HEK293 (cell line): ENCODE measurements at regions of chr22 and their contacts with region 1.

Region 1: DNA sequence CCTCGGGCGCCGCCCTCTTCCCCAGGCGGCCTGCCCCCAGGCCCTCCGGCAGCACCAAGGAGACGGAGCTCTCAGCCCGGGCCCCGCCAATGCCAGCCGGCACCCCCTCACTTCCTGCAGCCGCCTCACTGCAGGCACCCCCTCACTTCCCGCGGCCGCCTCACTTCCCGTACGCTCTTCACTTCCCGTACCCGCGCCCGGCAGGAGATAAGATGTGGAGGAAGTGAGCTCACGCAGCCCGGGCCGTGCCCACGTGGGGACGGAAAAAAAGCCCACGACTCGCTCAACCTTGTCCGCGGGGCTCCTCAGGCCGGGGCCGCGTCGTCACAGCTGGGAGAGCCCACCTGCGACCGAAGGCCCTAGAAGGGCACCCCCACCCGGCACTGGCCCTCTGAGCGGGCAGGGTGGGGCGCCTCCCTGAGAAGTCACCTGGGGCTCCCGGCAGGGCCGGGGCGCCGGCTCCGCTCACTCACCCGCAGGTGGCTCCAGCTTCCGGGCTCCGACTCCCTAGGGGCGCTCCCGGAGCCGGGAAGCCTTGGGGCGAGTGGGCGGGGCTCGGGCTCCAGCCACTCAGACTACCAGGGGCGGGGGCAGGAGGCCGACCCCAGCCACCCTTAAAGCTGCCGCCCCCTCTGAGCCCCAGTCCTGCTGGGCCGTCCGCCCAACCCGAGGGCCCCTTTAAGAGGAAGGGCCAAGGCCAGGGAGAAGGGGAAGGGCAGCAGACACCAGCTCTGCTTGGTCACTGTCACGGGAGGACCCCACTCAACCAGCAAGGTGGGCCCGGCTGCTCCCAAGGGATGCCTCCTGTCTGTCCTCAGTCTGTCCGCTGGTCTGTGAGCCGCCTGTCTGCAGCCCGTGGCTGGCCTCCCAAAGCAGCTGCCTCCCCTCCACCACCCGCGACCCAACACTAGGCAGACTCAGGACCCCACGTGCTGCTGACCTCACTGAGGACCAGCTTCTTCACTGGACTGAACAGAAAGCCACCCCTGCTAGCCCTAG is 31.4 kb downstream of the PISD start:
- H3K4me3 ChIP-seq: peak overlapping the region; percentile 73
- H3K27ac ChIP-seq: peak overlapping the region; percentile 80
- H3K4me1 ChIP-seq: peaks cover 2% of the 10 kb centered on the region; the same call in 1 of the 2 replicates
- CTCF ChIP-seq: no peak; the same call in 1 of the 2 replicates

Region 2: GRCh38 chr22:31345331-31346254 is 285.0 kb before region 1 on chr22:
- CTCF ChIA-PET with region 1: interaction called, 4 read pairs
- POLR2A ChIA-PET with region 1: interaction called, 10 read pairs
- H3K4me3 ChIP-seq: peak overlapping the region; percentile 70
- H3K27ac ChIP-seq: peak overlapping the region; percentile 92
- H3K4me1 ChIP-seq: peaks cover 23% of the 10 kb centered on the region
- CTCF ChIP-seq: peak; percentile 95

Region 3: DNA sequence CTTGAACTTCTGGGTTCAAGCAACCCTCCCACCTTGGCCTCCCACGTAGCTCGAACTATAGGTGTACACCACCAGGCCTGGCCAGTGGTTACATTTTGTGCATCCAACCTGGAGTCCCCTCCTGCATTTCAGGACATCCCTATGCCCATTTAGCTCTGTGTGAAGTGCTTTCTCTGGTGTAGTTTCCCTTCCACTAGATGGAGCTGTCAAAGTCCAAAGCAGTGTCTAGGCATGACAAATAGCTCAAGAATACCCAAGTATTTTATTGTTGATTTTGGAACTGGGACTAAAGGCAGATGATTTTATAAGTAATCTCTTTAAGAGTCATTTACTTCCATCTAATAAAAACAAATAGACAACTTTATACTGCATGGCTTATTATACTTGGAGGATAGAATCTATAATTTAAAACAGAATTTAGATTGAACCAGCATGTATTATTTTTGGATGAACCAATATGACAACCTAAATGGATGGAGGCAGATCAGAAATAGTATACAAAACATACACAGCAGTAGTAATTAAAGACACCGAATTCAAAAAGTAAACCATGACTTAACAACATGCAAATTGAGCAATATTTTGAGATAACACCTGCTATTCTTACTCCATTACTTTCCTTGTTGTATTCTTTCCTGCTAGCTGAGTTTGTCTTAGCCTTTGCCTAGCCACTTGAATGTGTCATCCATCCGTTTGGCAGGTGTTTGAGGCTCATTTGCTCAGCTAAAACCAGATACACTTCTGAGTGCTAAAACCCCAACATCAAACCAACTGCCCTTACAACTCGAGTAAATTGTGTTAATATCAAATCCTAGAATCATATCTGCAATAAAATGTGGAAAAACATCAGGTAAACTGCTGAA is 178.7 kb before region 1 on chr22:
- CTCF ChIA-PET with region 1: interaction called, 15 read pairs
- POLR2A ChIA-PET with region 1: interaction called, 3 read pairs
- H3K4me3 ChIP-seq: no peak overlapping the region
- H3K27ac ChIP-seq: no peak overlapping the region
- H3K4me1 ChIP-seq: no peaks in the 10 kb centered on the region
- CTCF ChIP-seq: no peak

Region 4: GRCh38 chr22:31561238-31561887 is 69.3 kb before region 1 on chr22:
- CTCF ChIA-PET with region 1: interaction called, 30 read pairs
- POLR2A ChIA-PET with region 1: interaction called, 7 read pairs
- H3K4me3 ChIP-seq: no peak overlapping the region
- H3K27ac ChIP-seq: 0 out of 2 replicates have a peak overlapping the region, but pooled peaks have one; percentile 30
- H3K4me1 ChIP-seq: no peaks in the 10 kb centered on the region
- CTCF ChIP-seq: peak; percentile 81

Region 5: DNA sequence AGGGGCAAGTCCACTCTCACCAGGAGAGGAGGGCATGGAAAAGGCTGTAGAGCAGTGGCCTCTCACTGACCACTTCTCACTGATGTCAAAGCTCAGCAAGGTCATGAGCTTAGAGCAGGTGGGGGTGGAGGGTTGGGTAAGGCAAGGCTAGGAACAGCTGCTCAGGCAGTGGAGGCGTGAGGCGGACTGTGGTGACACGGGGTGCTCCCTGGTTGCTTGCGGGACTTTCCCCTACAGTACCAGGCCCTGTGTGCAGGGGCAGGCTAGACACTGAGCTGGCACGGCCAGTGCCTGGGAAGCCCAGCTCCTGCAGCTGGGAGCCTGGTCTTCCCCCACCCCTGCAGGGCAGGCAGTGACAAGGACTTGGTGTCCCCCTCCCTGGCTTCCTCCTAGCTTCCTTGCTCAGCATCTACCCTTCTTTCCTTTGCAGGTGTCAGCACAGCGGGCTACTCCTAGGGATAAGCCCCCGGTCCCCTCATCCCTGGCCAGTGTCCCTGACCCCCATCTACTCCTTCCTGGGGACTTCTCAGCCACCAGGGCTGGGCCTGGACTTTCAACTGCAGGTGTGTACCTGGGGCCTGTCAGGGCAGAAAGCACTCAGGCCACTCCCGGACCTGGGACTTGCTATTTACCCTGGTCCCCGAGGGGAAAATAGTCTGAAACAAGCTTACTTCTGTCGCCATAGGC is 14.2 kb before region 1 on chr22:
- CTCF ChIA-PET with region 1: interaction called, 4 read pairs
- POLR2A ChIA-PET with region 1: interaction called, 10 read pairs
- H3K4me3 ChIP-seq: no peak overlapping the region
- H3K27ac ChIP-seq: no peak overlapping the region
- H3K4me1 ChIP-seq: no peaks in the 10 kb centered on the region
- CTCF ChIP-seq: no peak